ENCODE measurements at regions of chr21 and their contacts with region 1.

Region 1: GRCh38 chr21:44018812-44019567 is 6.9 kb downstream of the TRAPPC10 start:
- DNase-seq: no peak
- ATAC-seq: peak; percentile 10; the same call in 1 of the 3 replicates
- H3K4me3 ChIP-seq: no peak overlapping the region
- H3K27ac ChIP-seq: no peak overlapping the region
- H3K4me1 ChIP-seq: peaks cover 14% of the 10 kb centered on the region
- H3K27me3 ChIP-seq: no peaks in the 10 kb centered on the region
- CTCF ChIP-seq: no peak
- EP300 ChIP-seq: no peak
- POLR2A ChIP-seq: no peak
- RAD21 ChIP-seq: no peak

Region 2: DNA sequence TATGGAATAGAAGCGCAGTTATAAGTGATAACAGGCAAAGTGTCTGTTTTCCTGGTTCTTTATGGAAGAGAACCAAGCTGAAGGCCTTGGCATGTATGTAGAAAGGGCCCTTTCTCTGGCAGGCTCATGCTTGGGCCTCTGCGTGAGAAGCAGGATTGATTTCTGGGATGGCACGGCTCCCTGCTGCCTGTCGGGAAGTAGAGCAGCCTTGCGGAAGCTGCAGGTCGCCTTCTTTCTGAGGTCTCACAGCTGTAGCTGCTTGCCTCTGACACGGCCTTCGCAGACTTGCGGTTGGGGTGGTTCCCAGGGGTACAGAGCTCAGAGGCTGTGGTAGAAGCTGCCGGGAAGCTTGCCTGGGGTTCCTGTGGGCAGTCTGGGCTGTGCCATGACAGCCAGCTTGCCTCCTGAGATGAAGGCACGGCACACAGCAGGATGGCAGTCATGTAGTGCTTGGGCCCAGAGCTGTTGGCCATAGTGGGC is 32.5 kb after region 1 on chr21:
- CTCF ChIA-PET with region 1: no interaction called
- POLR2A ChIA-PET with region 1: no interaction called
- RAD21 ChIA-PET with region 1: interaction called, 3 read pairs
- SMC1A ChIA-PET with region 1: interaction called, 4 read pairs
- in situ Hi-C with region 1: loop called (anchors 5 kb)
- intact Hi-C with region 1: no loop called
- DNase-seq: no peak
- ATAC-seq: no peak
- H3K4me3 ChIP-seq: no peak overlapping the region
- H3K27ac ChIP-seq: no peak overlapping the region
- H3K4me1 ChIP-seq: no peaks in the 10 kb centered on the region
- H3K27me3 ChIP-seq: no peaks in the 10 kb centered on the region
- CTCF ChIP-seq: no peak
- EP300 ChIP-seq: no peak
- POLR2A ChIP-seq: no peak
- RAD21 ChIP-seq: no peak

Measured in GM12878 (cell line).